ENCODE measurements at regions of chr22 and their contacts with region 1.

Region 1: GRCh38 chr22:33401291-33401690 is 343.1 kb upstream of the SYN3 start:
- DNase-seq: no peak
- H3K4me3 ChIP-seq: no peak overlapping the region
- H3K27ac ChIP-seq: no peak overlapping the region
- H3K4me1 ChIP-seq: peaks cover 0 to 7% (median 0%) of the 10 kb centered on the region in 4 donors
- H3K27me3 ChIP-seq: no peaks in the 10 kb centered on the region
- CTCF ChIP-seq: no peak
- EP300 ChIP-seq: no peak
- POLR2A ChIP-seq: no peak

Region 2: GRCh38 chr22:33341611-33342010 is 59.7 kb before region 1 on chr22:
- in situ Hi-C with region 1: loop called in 1 of 4 experiments (anchors 10 kb)
- intact Hi-C with region 1: no loop called
- DNase-seq: no peak
- H3K4me3 ChIP-seq: no peak overlapping the region
- H3K27ac ChIP-seq: no peak overlapping the region
- H3K4me1 ChIP-seq: peaks cover 0 to 5% (median 0%) of the 10 kb centered on the region in 4 donors
- H3K27me3 ChIP-seq: no peaks in the 10 kb centered on the region
- CTCF ChIP-seq: no peak
- EP300 ChIP-seq: no peak
- POLR2A ChIP-seq: no peak

Region 3: DNA sequence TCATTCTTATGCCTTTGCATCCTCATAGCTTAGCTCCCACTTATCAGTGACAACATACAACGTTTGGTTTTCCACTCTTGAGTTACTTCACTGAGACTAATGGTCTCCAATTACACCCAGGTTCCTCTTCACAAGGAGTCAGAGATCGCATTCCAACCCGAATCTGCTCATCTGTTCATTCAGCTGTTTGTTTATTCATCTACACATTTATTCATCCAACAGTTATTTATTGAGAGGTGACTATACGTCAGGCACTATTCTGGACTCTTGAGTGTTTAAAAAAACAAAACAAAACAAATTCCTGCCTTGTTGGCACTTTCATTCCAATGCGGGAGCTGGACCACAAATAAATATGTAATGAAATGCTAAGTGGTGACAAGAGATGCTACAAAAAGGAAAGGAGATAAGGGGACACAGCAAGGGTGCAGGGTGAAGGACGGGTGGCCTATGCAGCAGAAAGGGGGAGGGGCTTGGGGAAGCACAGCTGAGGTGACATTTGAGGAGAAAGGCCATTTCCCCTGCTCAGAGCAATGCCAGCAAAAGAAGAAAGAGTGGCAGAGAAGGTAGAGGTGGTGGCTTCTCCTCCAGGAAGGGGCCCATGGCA is 50.7 kb after region 1 on chr22:
- in situ Hi-C with region 1: no loop called
- intact Hi-C with region 1: no loop called
- DNase-seq: no peak
- H3K4me3 ChIP-seq: no peak overlapping the region
- H3K27ac ChIP-seq: no peak overlapping the region
- H3K4me1 ChIP-seq: no peaks in the 10 kb centered on the region
- H3K27me3 ChIP-seq: no peaks in the 10 kb centered on the region
- CTCF ChIP-seq: no peak
- EP300 ChIP-seq: no peak
- POLR2A ChIP-seq: no peak

Region 4: GRCh38 chr22:33896575-33897447 is 495.5 kb after region 1 on chr22:
- in situ Hi-C with region 1: no loop called
- intact Hi-C with region 1: no loop called
- DNase-seq: no peak
- H3K4me3 ChIP-seq: no peak overlapping the region
- H3K27ac ChIP-seq: peak overlapping the region in 1 of 4 donors; percentile 0
- H3K4me1 ChIP-seq: peaks cover 0 to 5% (median 0%) of the 10 kb centered on the region in 4 donors
- H3K27me3 ChIP-seq: no peaks in the 10 kb centered on the region
- CTCF ChIP-seq: no peak
- EP300 ChIP-seq: no peak
- POLR2A ChIP-seq: no peak